Colonic mucosa (tissue), 4 donors: ENCODE measurements at regions of chr1 and their contacts with region 1.

Region 1: GRCh38 chr1:18597160-18598042 is 33.2 kb upstream of the PAX7 start:
- DNase-seq: peak; percentile 46
- H3K4me3 ChIP-seq: no peak overlapping the region
- H3K27ac ChIP-seq: no peak overlapping the region
- H3K4me1 ChIP-seq: no peaks in the 10 kb centered on the region
- H3K27me3 ChIP-seq: peaks cover 7% of the 10 kb centered on the region
- CTCF ChIP-seq: peak; percentile 96

Region 2: DNA sequence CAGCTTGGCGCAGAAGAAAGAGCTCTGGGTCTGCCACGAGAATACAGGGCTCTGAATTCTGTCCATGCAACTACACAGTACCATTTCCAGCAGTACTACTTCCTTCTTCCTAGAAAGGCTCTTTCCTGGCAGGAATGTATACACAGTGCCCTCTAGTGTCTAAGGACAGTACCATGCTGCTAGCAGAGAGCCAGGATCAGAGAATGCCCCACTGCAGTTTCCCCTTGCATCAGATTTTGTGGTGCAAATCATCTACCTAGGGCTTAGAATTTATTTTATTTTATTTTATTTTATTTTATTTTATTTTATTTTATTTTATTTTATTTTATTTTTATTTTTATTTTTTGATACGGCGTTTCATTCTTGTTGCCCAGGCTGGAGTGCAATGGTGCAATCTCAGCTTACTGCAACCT is 84.0 kb after region 1 on chr1:
- intact Hi-C with region 1: loop called (anchors 2 kb)
- DNase-seq: no peak
- H3K4me3 ChIP-seq: no peak overlapping the region
- H3K27ac ChIP-seq: no peak overlapping the region
- H3K4me1 ChIP-seq: no peaks in the 10 kb centered on the region
- H3K27me3 ChIP-seq: no peaks in the 10 kb centered on the region
- CTCF ChIP-seq: peak; percentile 61

Region 3: GRCh38 chr1:18820791-18821641 is 223.6 kb after region 1 on chr1:
- intact Hi-C with region 1: loop called (anchors 1 kb)
- DNase-seq: peak; percentile 75
- H3K4me3 ChIP-seq: no peak overlapping the region
- H3K27ac ChIP-seq: no peak overlapping the region
- H3K4me1 ChIP-seq: no peaks in the 10 kb centered on the region
- H3K27me3 ChIP-seq: peaks cover 9% of the 10 kb centered on the region
- CTCF ChIP-seq: peak; percentile 92

Region 4: DNA sequence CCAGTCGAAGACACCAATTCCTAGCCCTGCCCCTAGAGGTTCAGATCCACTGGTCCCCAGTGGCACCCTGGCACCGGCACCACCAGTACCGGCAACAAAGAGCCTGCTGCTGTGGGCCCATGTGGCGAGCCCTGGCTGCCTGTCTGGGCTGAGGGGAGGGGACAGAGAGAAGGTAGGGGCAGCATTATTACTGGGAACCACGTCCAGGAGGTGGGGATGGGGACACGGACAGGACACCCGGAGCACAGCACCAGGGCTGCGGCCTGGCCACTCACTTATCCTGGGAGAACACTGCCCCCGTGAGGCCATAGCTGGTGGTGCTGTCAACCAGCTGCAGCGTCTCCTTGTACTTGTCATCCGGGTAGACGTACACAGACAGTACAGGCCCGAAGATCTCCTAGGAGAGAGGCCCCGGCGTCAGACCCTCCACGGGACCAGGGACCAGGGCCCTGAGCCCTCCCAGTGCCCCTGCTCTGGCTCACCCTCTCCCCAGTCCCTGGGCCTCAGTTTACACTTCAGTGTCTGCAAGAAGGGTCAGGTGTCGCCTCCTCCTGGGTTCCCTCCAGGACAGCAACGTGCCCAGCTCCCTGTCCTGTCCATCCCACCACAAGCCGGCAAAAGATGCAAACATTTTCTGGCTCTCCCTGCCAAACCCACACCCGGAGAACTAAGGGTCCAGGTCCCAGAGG is 277.9 kb after region 1 on chr1:
- intact Hi-C with region 1: loop called (anchors 5 kb)
- DNase-seq: peak; percentile 85
- H3K4me3 ChIP-seq: no peak overlapping the region
- H3K27ac ChIP-seq: no peak overlapping the region
- H3K4me1 ChIP-seq: peaks cover 5% of the 10 kb centered on the region
- H3K27me3 ChIP-seq: no peaks in the 10 kb centered on the region
- CTCF ChIP-seq: peak; percentile 78